Endothelial cell of umbilical vein (primary cell): ENCODE measurements at regions of chr12 and their contacts with region 1.

Region 1: DNA sequence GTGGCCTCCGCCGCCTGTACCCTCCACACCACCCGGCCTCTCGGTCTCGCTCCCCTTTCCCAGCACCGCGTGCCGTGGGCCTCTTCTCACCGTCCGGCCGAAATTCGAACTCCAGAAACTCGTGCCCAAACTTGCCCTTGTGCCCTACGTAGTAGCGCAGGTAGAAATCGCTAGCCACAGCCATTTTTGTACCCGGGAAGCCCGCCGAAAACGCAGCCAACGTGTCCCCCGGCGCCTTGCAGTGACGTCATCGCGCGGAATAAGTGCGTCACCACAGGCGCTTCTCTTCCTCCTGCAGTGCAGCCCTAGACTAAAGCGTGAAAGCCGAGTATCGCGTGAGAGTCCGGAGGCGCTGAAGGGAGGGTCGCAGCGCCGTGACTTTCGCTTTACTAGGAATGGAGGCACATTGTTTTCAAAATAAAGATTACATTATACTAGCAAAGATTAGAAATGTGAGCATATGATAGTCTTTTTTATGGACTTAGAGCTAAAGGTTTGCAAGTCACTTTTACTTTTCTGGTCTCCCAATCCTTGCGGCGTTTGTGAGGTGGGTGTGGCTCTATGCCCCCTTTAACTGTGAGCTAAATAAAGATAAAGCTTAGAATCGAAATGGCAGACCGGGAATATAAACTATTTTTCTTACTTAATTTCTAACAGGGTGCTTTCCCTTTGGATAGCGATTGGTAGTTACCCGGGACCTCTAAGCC is at the start of gene MAGOHB:
- DNase-seq: peak; percentile 95
- H3K4me3 ChIP-seq: peak within 1 kb of the TSS; percentile 58 to 96 (median 93)
- H3K27ac ChIP-seq: peak within 1 kb of the TSS; percentile 90
- H3K4me1 ChIP-seq: peaks cover 18% of the 10 kb centered on the region
- H3K27me3 ChIP-seq: no peaks in the 10 kb centered on the region
- CTCF ChIP-seq: no peak
- POLR2A ChIP-seq: peak; percentile 70
- total RNA-seq, gene MAGOHB: 45.4 and 48.3 TPM in 2 replicates

Region 2: DNA sequence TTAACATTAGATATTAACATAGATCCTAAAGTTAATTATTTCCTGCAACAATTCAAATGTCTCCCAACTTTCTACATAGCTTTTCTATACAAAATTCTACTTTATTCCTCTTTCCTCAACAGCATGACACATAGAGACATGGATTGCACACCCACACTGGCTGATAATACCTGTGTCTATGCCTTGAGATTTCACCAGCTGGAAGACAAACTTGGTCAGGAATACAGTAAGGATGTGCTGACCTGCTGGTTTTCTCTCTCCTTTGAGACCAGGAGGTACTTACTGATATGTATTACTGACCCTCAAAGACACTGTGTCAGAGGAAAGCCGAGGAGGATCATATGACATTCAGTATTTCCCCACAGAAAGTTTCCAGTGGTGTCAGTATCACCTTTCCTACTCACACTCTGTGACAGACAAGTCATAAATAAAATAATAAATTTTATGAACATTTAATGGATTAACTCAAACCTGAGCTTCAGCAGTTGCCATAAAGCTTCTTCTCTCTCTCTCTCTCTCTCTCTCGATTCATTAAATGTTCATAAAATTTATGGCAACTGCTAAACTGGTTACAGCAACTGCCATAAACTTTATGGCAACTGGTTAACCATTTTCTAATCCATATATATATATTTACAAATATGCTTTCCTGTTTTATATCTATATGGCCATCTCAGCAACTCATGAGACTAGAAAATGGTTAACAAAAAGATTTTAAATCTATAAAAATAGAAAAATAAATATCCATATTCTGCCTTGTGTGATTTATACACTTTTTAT is 85.1 kb before region 1 on chr12:
- CTCF ChIA-PET with region 1: no interaction called
- POLR2A ChIA-PET with region 1: no interaction called
- dilution Hi-C with region 1: no loop called
- intact Hi-C with region 1: no loop called
- DNase-seq: no peak
- H3K4me3 ChIP-seq: no peak overlapping the region
- H3K27ac ChIP-seq: no peak overlapping the region
- H3K4me1 ChIP-seq: no peaks in the 10 kb centered on the region
- H3K27me3 ChIP-seq: no peaks in the 10 kb centered on the region
- CTCF ChIP-seq: no peak
- POLR2A ChIP-seq: no peak

Region 3: DNA sequence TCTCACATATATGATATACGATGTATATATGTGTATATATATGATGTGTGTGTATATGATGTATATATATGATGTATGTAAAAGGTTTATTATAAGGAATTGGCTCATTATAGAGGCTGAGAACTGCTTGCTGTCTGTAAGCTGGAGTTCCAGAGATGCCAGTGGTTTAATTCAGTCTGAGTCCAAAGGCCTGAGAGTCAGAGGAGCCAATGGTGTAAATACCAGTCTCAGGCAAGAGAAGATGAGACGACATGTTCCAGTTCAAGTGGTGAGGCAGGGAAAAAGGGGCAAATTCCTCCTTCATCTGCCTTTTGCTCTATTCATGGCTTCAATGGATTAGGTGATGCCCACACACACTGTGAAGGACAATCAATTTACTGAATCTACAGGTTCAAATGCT is 77.4 kb after region 1 on chr12:
- CTCF ChIA-PET with region 1: no interaction called
- POLR2A ChIA-PET with region 1: no interaction called
- dilution Hi-C with region 1: no loop called
- intact Hi-C with region 1: no loop called
- DNase-seq: no peak
- H3K4me3 ChIP-seq: no peak overlapping the region
- H3K27ac ChIP-seq: no peak overlapping the region
- H3K4me1 ChIP-seq: no peaks in the 10 kb centered on the region
- H3K27me3 ChIP-seq: no peaks in the 10 kb centered on the region
- CTCF ChIP-seq: no peak
- POLR2A ChIP-seq: no peak

Region 4: GRCh38 chr12:10721651-10722501 is 108.4 kb after region 1 on chr12:
- CTCF ChIA-PET with region 1: no interaction called
- POLR2A ChIA-PET with region 1: no interaction called
- dilution Hi-C with region 1: no loop called
- intact Hi-C with region 1: loop called (anchors 2 kb)
- DNase-seq: peak; percentile 100
- H3K4me3 ChIP-seq: peak overlapping the region; percentile 87 to 92 (median 88)
- H3K27ac ChIP-seq: peak overlapping the region; percentile 98
- H3K4me1 ChIP-seq: peaks cover 57% of the 10 kb centered on the region
- H3K27me3 ChIP-seq: no peaks in the 10 kb centered on the region
- CTCF ChIP-seq: no peak
- POLR2A ChIP-seq: peak; percentile 39